A673 (cell line): ENCODE measurements at regions of chr4 and their contacts with region 1.

Region 1: DNA sequence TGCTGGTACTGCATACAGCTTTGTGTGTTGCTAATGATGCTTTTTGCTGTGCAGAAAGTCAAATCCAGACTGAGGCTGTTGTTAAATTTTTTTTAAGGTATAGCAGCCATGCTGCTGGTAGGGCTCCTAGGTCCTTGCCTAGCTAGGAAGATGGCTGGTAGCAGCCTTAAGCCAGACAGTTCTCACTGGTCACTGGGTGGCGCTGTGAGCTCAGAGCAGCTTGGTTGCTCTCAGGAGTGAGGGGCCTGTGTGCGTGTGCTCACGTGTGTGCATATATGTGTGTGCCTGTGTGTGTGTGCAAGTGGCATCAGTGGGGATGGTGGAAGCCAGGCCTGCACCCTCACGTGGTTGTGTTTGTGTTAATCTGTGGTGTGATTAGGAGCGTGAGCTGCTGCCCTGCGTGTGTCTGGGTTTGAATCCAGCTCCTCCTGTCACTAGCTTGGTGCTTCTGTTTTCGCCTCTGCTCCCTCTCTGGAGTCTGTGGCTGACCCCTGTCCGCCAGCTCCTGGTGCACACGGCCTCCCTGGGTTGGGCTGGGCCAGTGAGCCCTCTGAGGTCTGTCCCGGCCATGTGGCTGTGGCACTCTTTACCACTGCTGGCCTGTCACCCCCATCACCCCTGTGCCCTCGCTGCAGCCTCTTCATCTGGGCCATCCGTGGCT is 46.1 kb downstream of the SORCS2 start:
- DNase-seq: peak; percentile 10
- H3K4me3 ChIP-seq: no peak overlapping the region
- H3K27ac ChIP-seq: no peak overlapping the region
- H3K4me1 ChIP-seq: no peaks in the 10 kb centered on the region
- H3K27me3 ChIP-seq: no peaks in the 10 kb centered on the region
- CTCF ChIP-seq: peak; percentile 27; the same call in 1 of the 2 replicates

Region 2: DNA sequence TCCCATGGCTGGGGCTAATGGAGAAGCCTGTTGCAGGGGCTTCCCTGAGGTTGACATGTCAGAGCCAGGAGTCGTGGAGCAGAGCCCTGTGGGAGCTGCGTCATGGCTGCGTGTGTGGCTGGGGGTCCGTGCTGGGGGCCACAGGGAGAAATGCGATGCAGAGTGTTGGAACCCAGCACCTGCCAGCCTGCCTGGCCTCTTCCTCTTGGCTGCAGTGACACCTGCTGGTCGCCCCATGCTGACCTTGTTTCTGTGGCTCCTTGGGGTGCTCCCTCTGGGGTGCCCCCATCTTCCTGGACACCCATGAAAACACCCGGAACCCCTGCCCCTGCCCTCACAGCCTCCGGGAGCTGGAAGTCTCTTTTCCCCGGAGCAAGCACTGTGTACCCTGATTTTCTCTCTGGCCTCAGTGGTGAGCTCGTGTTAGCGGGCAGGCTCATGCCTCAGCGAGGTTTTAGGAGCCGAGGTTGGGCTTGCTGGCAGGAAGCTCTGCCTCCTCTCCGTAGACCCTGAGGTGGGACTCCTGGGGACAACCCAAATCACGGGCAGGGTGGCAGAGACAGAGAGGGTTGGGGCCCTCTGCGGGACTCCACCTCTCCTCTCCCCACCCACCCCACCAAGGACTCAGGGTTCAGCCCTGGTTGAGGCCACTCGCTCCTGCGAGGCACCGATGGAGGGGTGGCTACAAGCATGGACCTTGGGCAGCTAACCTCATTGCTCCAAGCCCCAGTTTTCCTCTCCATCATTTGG is 57.7 kb after region 1 on chr4:
- CTCF ChIA-PET with region 1: interaction called, 16 read pairs
- POLR2A ChIA-PET with region 1: no interaction called
- intact Hi-C with region 1: no loop called
- DNase-seq: peak; percentile 22
- H3K4me3 ChIP-seq: no peak overlapping the region
- H3K27ac ChIP-seq: no peak overlapping the region
- H3K4me1 ChIP-seq: no peaks in the 10 kb centered on the region
- H3K27me3 ChIP-seq: no peaks in the 10 kb centered on the region
- CTCF ChIP-seq: peak; percentile 51

Region 3: GRCh38 chr4:7843831-7844593 is 605.6 kb after region 1 on chr4:
- CTCF ChIA-PET with region 1: no interaction called
- POLR2A ChIA-PET with region 1: no interaction called
- intact Hi-C with region 1: no loop called
- DNase-seq: peak; percentile 82
- H3K4me3 ChIP-seq: no peak overlapping the region
- H3K27ac ChIP-seq: peak overlapping the region; percentile 21
- H3K4me1 ChIP-seq: peaks cover 5% of the 10 kb centered on the region
- H3K27me3 ChIP-seq: no peaks in the 10 kb centered on the region
- CTCF ChIP-seq: peak; percentile 82